ENCODE measurements at regions of chr1 and their contacts with region 1.

Region 1: GRCh38 chr1:219209578-219209977 is 35.9 kb downstream of the LYPLAL1 start:
- DNase-seq: no peak
- H3K4me3 Mint-ChIP-seq: no peak overlapping the region
- H3K27ac Mint-ChIP-seq: no peak overlapping the region
- H3K4me1 Mint-ChIP-seq: no peaks in the 10 kb centered on the region
- H3K27me3 Mint-ChIP-seq: no peaks in the 10 kb centered on the region

Region 2: DNA sequence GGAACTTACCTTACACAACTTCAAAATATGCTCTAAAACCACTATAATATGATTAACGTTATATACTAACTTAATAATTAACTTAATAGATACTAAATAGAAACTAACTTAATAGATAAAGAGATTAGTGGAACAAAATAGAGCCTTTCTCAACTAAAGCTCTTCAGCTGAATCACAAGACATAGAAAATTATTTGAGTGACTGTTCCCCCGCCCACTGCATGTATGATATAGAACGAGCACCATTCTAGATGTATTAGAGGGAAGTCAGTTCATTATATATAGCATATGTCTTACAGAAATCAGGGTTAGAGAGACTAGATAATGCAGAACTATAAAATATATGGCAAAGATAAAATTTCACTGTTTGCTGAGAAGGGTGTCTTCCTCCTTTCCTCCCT is 19.6 kb before region 1 on chr1:
- intact Hi-C with region 1: no loop called
- DNase-seq: no peak
- H3K4me3 Mint-ChIP-seq: no peak overlapping the region
- H3K27ac Mint-ChIP-seq: no peak overlapping the region
- H3K4me1 Mint-ChIP-seq: peaks cover 25% of the 10 kb centered on the region
- H3K27me3 Mint-ChIP-seq: no peaks in the 10 kb centered on the region

Region 3: DNA sequence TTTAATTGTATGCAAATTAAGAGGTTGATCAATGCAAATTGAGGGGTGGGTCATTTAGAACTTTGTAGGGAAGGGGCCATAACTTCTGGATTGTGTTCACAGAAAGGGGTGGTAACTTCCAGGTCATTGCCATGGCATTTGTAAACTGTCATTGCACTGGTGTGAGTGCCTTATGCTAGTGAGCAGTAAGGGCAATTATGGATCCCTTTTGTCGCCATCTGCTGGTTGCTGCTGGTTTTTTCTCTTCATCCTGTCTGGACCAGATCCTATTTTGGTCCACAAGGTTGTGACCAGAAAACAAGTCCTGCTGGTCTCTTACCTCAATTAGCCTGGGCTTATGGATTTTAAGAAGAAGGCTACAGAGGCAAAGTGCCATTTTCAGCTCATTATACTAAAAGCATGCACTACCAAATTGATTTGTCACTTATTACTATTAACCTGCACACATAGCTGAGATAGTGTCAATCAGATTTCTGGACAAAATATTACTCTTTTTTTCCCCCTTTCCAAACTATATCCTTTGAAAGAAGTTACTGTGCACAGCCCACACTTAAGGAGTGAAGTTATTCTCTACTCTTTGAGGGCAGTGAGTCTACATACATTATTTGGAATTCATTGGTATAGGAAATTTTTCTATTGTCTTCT is 207.1 kb after region 1 on chr1:
- intact Hi-C with region 1: loop called (anchors 1 kb)
- DNase-seq: peak; percentile 6
- H3K4me3 Mint-ChIP-seq: no peak overlapping the region
- H3K27ac Mint-ChIP-seq: no peak overlapping the region
- H3K4me1 Mint-ChIP-seq: no peaks in the 10 kb centered on the region
- H3K27me3 Mint-ChIP-seq: no peaks in the 10 kb centered on the region

Region 4: GRCh38 chr1:219660666-219661463 is 451.3 kb after region 1 on chr1:
- intact Hi-C with region 1: loop called (anchors 2 kb)
- DNase-seq: peak; percentile 20
- H3K4me3 Mint-ChIP-seq: peak overlapping the region; percentile 42
- H3K27ac Mint-ChIP-seq: no peak overlapping the region
- H3K4me1 Mint-ChIP-seq: peaks cover 6% of the 10 kb centered on the region
- H3K27me3 Mint-ChIP-seq: peaks cover 4% of the 10 kb centered on the region

Measured in activated T-helper 1 cell treated with anti-CD3 and anti-CD28 coated beads, Interleukin-12 subunit alpha, Interleukin-12 subunit beta, Interleukin-2, Interleukin-4 antibody, amounts not matched to agents 30 ng/mL and 10 ng/mL and 1 ng/mL, durations not matched to agents 14 hours and 24 hours and 36 hours (primary cell).